Dorsolateral prefrontal cortex (tissue), 120 donors: ENCODE measurements at regions of chr13 and their contacts with region 1.

Region 1: GRCh38 chr13:46010148-46010547 is 42.4 kb downstream of the ZC3H13 start:
- DNase-seq: peak in 2 of 10 donors; percentile 10 to 15
- H3K4me3 ChIP-seq: no peak overlapping the region
- H3K27ac ChIP-seq: no peak overlapping the region
- H3K27me3 ChIP-seq: no peaks in the 10 kb centered on the region
- CTCF ChIP-seq: peak in 52 of 56 donors; percentile 18 to 63 (median 44)

Region 2: GRCh38 chr13:45817833-45818232 is 192.3 kb before region 1 on chr13:
- intact Hi-C with region 1: loop called in 1 of 2 experiments (anchors 10 kb)
- DNase-seq: no peak
- H3K4me3 ChIP-seq: no peak overlapping the region
- H3K27ac ChIP-seq: no peak overlapping the region
- H3K27me3 ChIP-seq: no peaks in the 10 kb centered on the region
- CTCF ChIP-seq: no peak